CD8-positive, alpha-beta memory T cell (primary cell): ENCODE measurements at regions of chr12 and their contacts with region 1.

Region 1: GRCh38 chr12:49130151-49131050 is 794 bp downstream of the TUBA1B start:
- DNase-seq: peak; percentile 86 to 97 (median 93)
- H3K4me3 ChIP-seq: peak overlapping the region; percentile 90
- H3K4me3 Mint-ChIP-seq: peak overlapping the region; percentile 97 to 100 (median 98)
- H3K27ac ChIP-seq: peak overlapping the region; percentile 98
- H3K27ac Mint-ChIP-seq: peak overlapping the region; percentile 96 to 99 (median 98)
- H3K4me1 ChIP-seq: peaks cover 26% of the 10 kb centered on the region
- H3K4me1 Mint-ChIP-seq: peaks cover 39 to 58% (median 55%) of the 10 kb centered on the region in 3 donors
- H3K27me3 ChIP-seq: no peaks in the 10 kb centered on the region
- H3K27me3 Mint-ChIP-seq: peaks cover 0 to 8% of the 10 kb centered on the region in 2 donors

Region 2: GRCh38 chr12:48788854-48789796 is 341.3 kb before region 1 on chr12 and contains the start of gene ADCY6:
- CTCF ChIA-PET with region 1: no interaction called
- POLR2A ChIA-PET with region 1: no interaction called
- DNase-seq: no peak
- H3K4me3 ChIP-seq: no peak within 1 kb of the TSS
- H3K4me3 Mint-ChIP-seq: peak within 1 kb of the TSS; percentile 21 to 84 (median 75)
- H3K27ac ChIP-seq: no peak within 1 kb of the TSS
- H3K27ac Mint-ChIP-seq: peak within 1 kb of the TSS in 1 of 8 donors; percentile 39
- H3K4me1 ChIP-seq: no peaks in the 10 kb centered on the region
- H3K4me1 Mint-ChIP-seq: peaks cover 4 to 20% (median 4%) of the 10 kb centered on the region in 3 donors
- H3K27me3 ChIP-seq: peaks cover 15% of the 10 kb centered on the region
- H3K27me3 Mint-ChIP-seq: peaks cover 30 to 60% of the 10 kb centered on the region in 2 donors
- total RNA-seq, gene ADCY6: 0.04 to 0.37 TPM

Region 3: GRCh38 chr12:49069507-49070346 is 60.7 kb before region 1 on chr12 and contains the start of gene RHEBL1:
- CTCF ChIA-PET with region 1: interaction called, 18 read pairs
- POLR2A ChIA-PET with region 1: interaction called, 13 read pairs
- DNase-seq: peak; percentile 98 to 99 (median 99)
- H3K4me3 ChIP-seq: peak within 1 kb of the TSS; percentile 93
- H3K4me3 Mint-ChIP-seq: peak within 1 kb of the TSS; percentile 87 to 98 (median 94)
- H3K27ac ChIP-seq: peak within 1 kb of the TSS; percentile 83
- H3K27ac Mint-ChIP-seq: peak within 1 kb of the TSS; percentile 72 to 99 (median 91)
- H3K4me1 ChIP-seq: peaks cover 16% of the 10 kb centered on the region
- H3K4me1 Mint-ChIP-seq: peaks cover 18 to 21% (median 21%) of the 10 kb centered on the region in 3 donors
- H3K27me3 ChIP-seq: no peaks in the 10 kb centered on the region
- H3K27me3 Mint-ChIP-seq: no peaks in the 10 kb centered on the region
- total RNA-seq, gene RHEBL1: 10.1 to 10.2 TPM

Region 4: DNA sequence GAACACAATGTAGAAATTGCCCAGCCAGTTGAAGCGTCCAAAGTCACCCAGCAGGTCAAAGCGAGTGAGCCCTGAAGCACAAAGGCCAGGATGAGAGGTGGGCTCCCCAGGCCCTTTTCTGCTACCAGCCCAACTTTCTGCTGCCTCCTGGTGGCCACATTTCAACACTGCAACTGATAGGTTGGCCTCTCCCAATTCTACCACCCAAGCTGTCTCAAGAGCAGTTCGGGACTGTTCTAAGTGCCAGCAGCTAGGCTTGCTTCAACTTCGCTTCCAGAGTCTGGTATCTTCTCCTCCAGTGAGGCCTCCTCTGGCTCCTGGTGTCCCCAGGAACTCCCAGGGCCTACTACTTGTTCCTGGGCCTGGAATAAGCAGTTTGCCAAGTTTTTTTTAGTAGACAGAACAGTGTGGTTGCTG is 32.4 kb before region 1 on chr12:
- CTCF ChIA-PET with region 1: interaction called, 26 read pairs
- POLR2A ChIA-PET with region 1: interaction called, 12 read pairs
- DNase-seq: peak; percentile 43 to 75 (median 50)
- H3K4me3 ChIP-seq: no peak overlapping the region
- H3K4me3 Mint-ChIP-seq: no peak overlapping the region
- H3K27ac ChIP-seq: no peak overlapping the region
- H3K27ac Mint-ChIP-seq: peak overlapping the region in 2 of 8 donors; percentile 27 to 52
- H3K4me1 ChIP-seq: peaks cover 13% of the 10 kb centered on the region
- H3K4me1 Mint-ChIP-seq: peaks cover 15 to 19% (median 16%) of the 10 kb centered on the region in 3 donors
- H3K27me3 ChIP-seq: peaks cover 18% of the 10 kb centered on the region
- H3K27me3 Mint-ChIP-seq: peaks cover 20 to 21% of the 10 kb centered on the region in 2 donors

Region 5: GRCh38 chr12:49105608-49106007 is 24.8 kb before region 1 on chr12:
- CTCF ChIA-PET with region 1: interaction called, 77 read pairs
- POLR2A ChIA-PET with region 1: interaction called, 74 read pairs
- DNase-seq: no peak
- H3K4me3 ChIP-seq: no peak overlapping the region
- H3K4me3 Mint-ChIP-seq: no peak overlapping the region
- H3K27ac ChIP-seq: no peak overlapping the region
- H3K27ac Mint-ChIP-seq: peak overlapping the region in 1 of 8 donors; percentile 78
- H3K4me1 ChIP-seq: peaks cover 14% of the 10 kb centered on the region
- H3K4me1 Mint-ChIP-seq: peaks cover 31 to 42% (median 35%) of the 10 kb centered on the region in 3 donors
- H3K27me3 ChIP-seq: no peaks in the 10 kb centered on the region
- H3K27me3 Mint-ChIP-seq: no peaks in the 10 kb centered on the region

Region 6: GRCh38 chr12:49110464-49111155 is 19.8 kb before region 1 on chr12 and contains the start of gene LMBR1L:
- CTCF ChIA-PET with region 1: interaction called, 77 read pairs
- POLR2A ChIA-PET with region 1: interaction called, 74 read pairs
- DNase-seq: peak; percentile 92 to 98 (median 96)
- H3K4me3 ChIP-seq: peak within 1 kb of the TSS; percentile 93
- H3K4me3 Mint-ChIP-seq: peak within 1 kb of the TSS; percentile 97 to 99 (median 99)
- H3K27ac ChIP-seq: peak within 1 kb of the TSS; percentile 87
- H3K27ac Mint-ChIP-seq: peak within 1 kb of the TSS; percentile 86 to 98 (median 98)
- H3K4me1 ChIP-seq: peaks cover 21% of the 10 kb centered on the region
- H3K4me1 Mint-ChIP-seq: peaks cover 36 to 44% (median 43%) of the 10 kb centered on the region in 3 donors
- H3K27me3 ChIP-seq: no peaks in the 10 kb centered on the region
- H3K27me3 Mint-ChIP-seq: no peaks in the 10 kb centered on the region
- total RNA-seq, gene LMBR1L: 47.2 to 48.7 TPM

Region 7: GRCh38 chr12:49188914-49189367 is 58.5 kb after region 1 on chr12 and contains the start of gene TUBA1A:
- CTCF ChIA-PET with region 1: interaction called, 39 read pairs
- POLR2A ChIA-PET with region 1: interaction called, 133 read pairs
- DNase-seq: peak; percentile 90 to 99 (median 97)
- H3K4me3 ChIP-seq: peak within 1 kb of the TSS; percentile 79
- H3K4me3 Mint-ChIP-seq: peak within 1 kb of the TSS; percentile 97 to 99 (median 98)
- H3K27ac ChIP-seq: peak within 1 kb of the TSS; percentile 97
- H3K27ac Mint-ChIP-seq: peak within 1 kb of the TSS; percentile 97 to 100 (median 98)
- H3K4me1 ChIP-seq: peaks cover 18% of the 10 kb centered on the region
- H3K4me1 Mint-ChIP-seq: peaks cover 26 to 40% (median 35%) of the 10 kb centered on the region in 3 donors
- H3K27me3 ChIP-seq: no peaks in the 10 kb centered on the region
- H3K27me3 Mint-ChIP-seq: peaks cover 0 to 8% of the 10 kb centered on the region in 2 donors
- total RNA-seq, gene TUBA1A: 67.8 to 70.4 TPM

Region 8: DNA sequence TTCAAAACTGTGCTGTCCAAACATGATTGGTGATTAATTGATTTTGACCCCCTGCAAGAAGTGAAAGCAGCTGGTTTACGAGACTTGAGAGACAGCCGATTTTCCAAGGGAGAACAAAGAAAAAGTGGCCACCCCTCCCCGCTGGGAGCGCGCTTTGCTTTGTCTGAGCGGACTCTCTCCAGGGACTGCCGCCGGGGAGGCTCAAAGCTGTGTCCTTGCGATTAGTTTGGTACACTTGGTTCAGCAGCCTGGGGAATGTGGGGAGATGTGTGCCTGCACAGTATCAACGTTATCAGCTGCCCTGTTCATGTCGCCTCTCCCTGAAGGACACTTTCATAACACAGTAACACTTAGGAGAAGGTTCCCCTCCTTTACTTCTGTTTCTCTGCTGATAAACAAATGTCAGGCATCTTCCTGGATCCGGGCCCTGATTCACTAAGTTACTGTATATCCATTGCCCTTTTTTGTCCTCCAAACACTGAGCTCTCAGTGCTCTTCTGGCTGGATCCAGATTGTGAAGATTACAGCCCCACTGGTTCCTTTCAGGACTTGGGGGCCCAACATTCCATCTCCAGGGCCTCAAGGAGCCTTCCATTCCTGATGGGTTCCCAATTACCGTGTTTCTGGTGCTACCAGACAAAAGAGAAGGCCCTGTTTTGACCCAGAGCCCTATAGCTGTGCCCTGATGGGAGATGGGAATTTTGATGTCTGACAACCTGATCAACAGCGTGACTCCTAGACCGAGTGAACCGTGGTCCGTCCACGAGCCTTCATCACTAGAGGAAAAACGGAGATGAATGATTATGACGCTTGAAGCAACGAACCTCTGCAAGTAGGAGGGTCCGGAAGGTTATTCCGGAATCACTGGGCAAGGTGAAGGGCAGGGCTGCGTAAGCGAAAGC is 102.8 kb after region 1 on chr12:
- CTCF ChIA-PET with region 1: interaction called, 11 read pairs
- POLR2A ChIA-PET with region 1: interaction called, 25 read pairs
- DNase-seq: no peak
- H3K4me3 ChIP-seq: no peak overlapping the region
- H3K4me3 Mint-ChIP-seq: peak overlapping the region; percentile 27 to 84 (median 63)
- H3K27ac ChIP-seq: peak overlapping the region; percentile 66
- H3K27ac Mint-ChIP-seq: peak overlapping the region in 3 of 8 donors; percentile 38 to 73 (median 72)
- H3K4me1 ChIP-seq: peaks cover 5% of the 10 kb centered on the region
- H3K4me1 Mint-ChIP-seq: peaks cover 0 to 10% (median 4%) of the 10 kb centered on the region in 3 donors
- H3K27me3 ChIP-seq: no peaks in the 10 kb centered on the region
- H3K27me3 Mint-ChIP-seq: peaks cover 0 to 1% of the 10 kb centered on the region in 2 donors

Region 9: GRCh38 chr12:49598527-49598926 is 468.1 kb after region 1 on chr12:
- CTCF ChIA-PET with region 1: no interaction called
- POLR2A ChIA-PET with region 1: no interaction called
- DNase-seq: no peak
- H3K4me3 ChIP-seq: no peak overlapping the region
- H3K4me3 Mint-ChIP-seq: no peak overlapping the region
- H3K27ac ChIP-seq: no peak overlapping the region
- H3K27ac Mint-ChIP-seq: peak overlapping the region in 2 of 8 donors; percentile 56 to 75
- H3K4me1 ChIP-seq: no peaks in the 10 kb centered on the region
- H3K4me1 Mint-ChIP-seq: no peaks in the 10 kb centered on the region
- H3K27me3 ChIP-seq: no peaks in the 10 kb centered on the region
- H3K27me3 Mint-ChIP-seq: no peaks in the 10 kb centered on the region